ENCODE measurements at regions of chr1 and their contacts with region 1.

Region 1: GRCh38 chr1:167499664-167500101 is 18.6 kb downstream of the CD247 start:
- DNase-seq: peak in 1 of 5 donors; percentile 62
- H3K4me3 ChIP-seq: no peak overlapping the region
- H3K4me3 Mint-ChIP-seq: peak overlapping the region in 7 of 8 donors; percentile 26 to 88 (median 73)
- H3K27ac ChIP-seq: peak overlapping the region; percentile 32
- H3K27ac Mint-ChIP-seq: peak overlapping the region; percentile 75 to 100 (median 88)
- H3K4me1 ChIP-seq: peaks cover 100% of the 10 kb centered on the region
- H3K4me1 Mint-ChIP-seq: peaks cover 83 to 100% (median 95%) of the 10 kb centered on the region in 4 donors
- H3K27me3 ChIP-seq: no peaks in the 10 kb centered on the region
- H3K27me3 Mint-ChIP-seq: no peaks in the 10 kb centered on the region

Region 2: GRCh38 chr1:167486090-167486824 is 13.4 kb before region 1 on chr1:
- CTCF ChIA-PET with region 1: interaction called, 8 read pairs
- POLR2A ChIA-PET with region 1: interaction called, 22 read pairs
- intact Hi-C with region 1: loop called (anchors 2 kb)
- DNase-seq: peak in 1 of 5 donors; percentile 46
- H3K4me3 ChIP-seq: no peak overlapping the region
- H3K4me3 Mint-ChIP-seq: peak overlapping the region; percentile 38 to 89 (median 75)
- H3K27ac ChIP-seq: peak overlapping the region; percentile 55
- H3K27ac Mint-ChIP-seq: peak overlapping the region; percentile 52 to 100 (median 94)
- H3K4me1 ChIP-seq: peaks cover 99% of the 10 kb centered on the region
- H3K4me1 Mint-ChIP-seq: peaks cover 76 to 100% (median 90%) of the 10 kb centered on the region in 4 donors
- H3K27me3 ChIP-seq: no peaks in the 10 kb centered on the region
- H3K27me3 Mint-ChIP-seq: no peaks in the 10 kb centered on the region

Region 3: GRCh38 chr1:167573026-167573425 is 73.3 kb after region 1 on chr1:
- CTCF ChIA-PET with region 1: no interaction called
- POLR2A ChIA-PET with region 1: no interaction called
- intact Hi-C with region 1: no loop called
- DNase-seq: no peak
- H3K4me3 ChIP-seq: no peak overlapping the region
- H3K4me3 Mint-ChIP-seq: no peak overlapping the region
- H3K27ac ChIP-seq: no peak overlapping the region
- H3K27ac Mint-ChIP-seq: no peak overlapping the region
- H3K4me1 ChIP-seq: no peaks in the 10 kb centered on the region
- H3K4me1 Mint-ChIP-seq: no peaks in the 10 kb centered on the region
- H3K27me3 ChIP-seq: no peaks in the 10 kb centered on the region
- H3K27me3 Mint-ChIP-seq: peaks cover 10 to 24% of the 10 kb centered on the region in 2 donors